HepG2 (cell line): ENCODE measurements at regions of chr22 and their contacts with region 1.

Region 1: DNA sequence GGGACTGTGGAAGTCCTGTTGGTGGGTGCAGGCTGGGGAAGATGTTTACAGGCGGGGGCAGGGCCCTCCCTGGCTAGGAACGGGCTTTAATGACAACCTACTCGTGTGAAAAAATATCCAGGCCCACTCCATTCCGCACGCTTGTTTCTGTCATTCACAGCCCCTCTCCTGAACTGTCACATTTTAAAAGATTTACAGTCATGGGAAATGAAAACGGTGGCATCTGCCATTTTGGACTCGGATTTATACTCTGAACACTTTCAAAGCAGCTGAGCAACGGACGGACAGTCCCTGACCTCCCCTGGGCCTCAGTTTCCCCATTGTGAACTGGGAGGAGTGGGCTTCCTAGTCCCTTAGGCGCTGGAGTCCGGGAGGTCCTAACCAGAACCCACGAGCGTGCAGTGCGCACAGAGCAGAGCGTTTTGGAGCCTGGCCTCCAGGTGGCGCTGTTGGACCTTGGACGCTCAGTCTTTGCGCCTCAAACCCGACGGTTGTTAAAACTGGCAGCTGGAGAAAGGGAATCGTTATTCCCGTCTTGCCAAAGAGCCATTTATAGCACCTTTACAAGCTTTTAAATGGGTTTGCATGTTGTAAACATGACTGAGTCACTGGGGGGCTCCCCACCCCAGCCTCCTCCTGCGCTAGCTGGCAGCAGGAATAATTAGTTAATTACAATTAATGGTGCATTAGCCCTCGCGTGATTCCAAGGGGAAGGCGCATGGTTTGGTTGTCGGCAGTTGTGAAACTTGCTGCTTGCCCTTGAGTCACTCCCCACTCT is 75.3 kb downstream of the FBLN1 start:
- DNase-seq: peak; percentile 64
- ATAC-seq: peak; percentile 88
- H3K4me3 ChIP-seq: no peak overlapping the region
- H3K27ac ChIP-seq: no peak overlapping the region
- H3K4me1 ChIP-seq: no peaks in the 10 kb centered on the region
- H3K27me3 ChIP-seq: no peaks in the 10 kb centered on the region
- CTCF ChIP-seq: peak; percentile 97
- EP300 ChIP-seq: no peak
- POLR2A ChIP-seq: no peak
- RAD21 ChIP-seq: peak; percentile 95

Region 2: DNA sequence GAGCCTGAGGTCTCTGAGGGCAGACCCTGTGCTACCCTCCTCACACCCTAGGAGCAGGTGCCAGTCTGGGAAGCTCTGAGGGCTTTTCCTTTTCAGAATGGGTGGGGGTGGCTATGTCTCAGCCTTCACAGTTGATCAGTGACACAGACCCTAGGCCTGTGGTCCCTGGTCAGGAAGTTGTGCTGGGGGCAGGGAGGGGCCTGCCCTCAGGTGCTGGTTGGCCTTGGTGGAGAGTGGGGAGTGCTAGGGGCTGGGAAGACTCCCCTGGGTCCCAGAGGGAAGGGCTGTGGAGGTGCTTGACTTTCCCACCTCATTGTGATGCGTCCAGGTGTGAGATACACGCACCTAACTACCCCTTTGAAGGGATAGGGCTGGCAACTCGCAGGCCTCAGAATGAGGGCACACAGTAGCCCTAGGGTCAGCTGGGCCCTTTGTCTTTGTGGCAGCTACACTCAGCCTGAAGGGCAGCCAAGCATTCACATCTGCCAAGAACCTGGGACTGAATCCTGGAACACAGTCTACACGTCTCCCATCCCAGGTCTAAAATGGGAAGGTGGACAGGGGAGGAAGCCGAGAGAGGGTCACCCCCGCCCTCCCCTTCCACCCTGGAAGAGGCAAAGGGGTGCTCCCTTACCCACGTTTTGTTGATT is 62.5 kb after region 1 on chr22:
- CTCF ChIA-PET with region 1: interaction called, 5 read pairs
- POLR2A ChIA-PET with region 1: no interaction called
- in situ Hi-C with region 1: loop called (anchors 5 kb)
- intact Hi-C with region 1: no loop called
- DNase-seq: no peak
- ATAC-seq: no peak
- H3K4me3 ChIP-seq: no peak overlapping the region
- H3K27ac ChIP-seq: no peak overlapping the region
- H3K4me1 ChIP-seq: peaks cover 74% of the 10 kb centered on the region
- H3K27me3 ChIP-seq: no peaks in the 10 kb centered on the region; a peak in 1 of 5 replicates
- CTCF ChIP-seq: no peak
- EP300 ChIP-seq: no peak
- POLR2A ChIP-seq: no peak
- RAD21 ChIP-seq: no peak

Region 3: GRCh38 chr22:45863981-45864751 is 286.2 kb after region 1 on chr22:
- CTCF ChIA-PET with region 1: no interaction called
- POLR2A ChIA-PET with region 1: no interaction called
- in situ Hi-C with region 1: loop called (anchors 5 kb)
- intact Hi-C with region 1: no loop called
- DNase-seq: peak; percentile 45
- ATAC-seq: peak; percentile 25
- H3K4me3 ChIP-seq: no peak overlapping the region
- H3K27ac ChIP-seq: no peak overlapping the region
- H3K4me1 ChIP-seq: peaks cover 13% of the 10 kb centered on the region
- H3K27me3 ChIP-seq: peaks cover 1 to 16% of the 10 kb centered on the region in 2 experiments; a peak in 3 of 5 replicates
- CTCF ChIP-seq: peak; percentile 81
- EP300 ChIP-seq: no peak
- POLR2A ChIP-seq: no peak
- RAD21 ChIP-seq: peak; percentile 50; the same call in 1 of the 2 replicates

Region 4: GRCh38 chr22:45968751-45969413 is 390.9 kb after region 1 on chr22:
- CTCF ChIA-PET with region 1: no interaction called
- POLR2A ChIA-PET with region 1: no interaction called
- in situ Hi-C with region 1: no loop called
- intact Hi-C with region 1: loop called (anchors 2 kb)
- DNase-seq: no peak
- ATAC-seq: no peak
- H3K4me3 ChIP-seq: no peak overlapping the region
- H3K27ac ChIP-seq: no peak overlapping the region
- H3K4me1 ChIP-seq: peaks cover 40% of the 10 kb centered on the region
- H3K27me3 ChIP-seq: peaks cover 23 to 92% of the 10 kb centered on the region in 2 experiments
- CTCF ChIP-seq: no peak
- EP300 ChIP-seq: no peak
- POLR2A ChIP-seq: no peak
- RAD21 ChIP-seq: no peak